Transverse colon (tissue), 4 donors: ENCODE measurements at regions of chr11 and their contacts with region 1.

Region 1: DNA sequence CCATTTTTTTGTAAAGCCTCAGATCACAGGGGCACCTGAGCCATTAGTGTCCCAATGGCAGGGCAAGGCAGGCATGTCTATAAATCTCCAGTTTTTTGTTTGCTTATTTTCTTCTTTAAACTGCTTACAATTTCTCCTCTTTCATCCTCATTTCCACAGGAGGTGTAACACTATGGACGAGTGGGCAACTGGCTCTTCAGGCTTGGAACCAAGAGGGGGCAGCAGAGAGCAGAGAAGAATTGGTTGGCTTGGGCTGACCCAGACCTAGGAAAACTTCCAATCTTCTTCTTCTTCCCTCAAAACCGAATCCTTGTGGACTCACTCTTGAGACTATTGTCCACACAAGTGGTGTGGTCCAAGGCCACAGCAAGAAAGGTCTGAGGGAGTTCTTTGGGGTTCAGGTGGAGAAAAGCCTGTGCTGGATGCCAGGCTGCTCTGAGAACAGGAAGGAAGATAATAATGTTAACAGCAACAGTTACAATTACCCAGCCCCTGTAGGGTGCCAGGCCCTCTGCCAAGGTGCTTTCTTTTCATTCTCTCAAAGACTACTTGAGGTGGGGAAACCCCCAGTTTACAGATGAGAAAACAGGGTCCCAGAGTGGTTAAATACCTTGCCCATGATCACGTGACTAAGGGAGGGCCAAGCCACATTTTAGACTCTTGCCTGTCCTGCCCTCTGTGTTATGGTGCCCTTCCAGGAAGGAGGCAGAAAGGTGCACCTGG is 70.7 kb upstream of the E2F8 start:
- DNase-seq: peak; percentile 74
- H3K4me3 ChIP-seq: no peak overlapping the region
- H3K27ac ChIP-seq: no peak overlapping the region
- H3K4me1 ChIP-seq: peaks cover under 1 to 12% (median under 1%) of the 10 kb centered on the region in 4 donors
- H3K27me3 ChIP-seq: no peaks in the 10 kb centered on the region
- CTCF ChIP-seq: peak; percentile 65 to 80 (median 75)
- EP300 ChIP-seq: no peak
- POLR2A ChIP-seq: no peak

Region 2: GRCh38 chr11:19525276-19526113 is 214.0 kb after region 1 on chr11:
- in situ Hi-C with region 1: loop called in 1 of 4 experiments (anchors 25 kb)
- intact Hi-C with region 1: no loop called
- DNase-seq: no peak
- H3K4me3 ChIP-seq: no peak overlapping the region
- H3K27ac ChIP-seq: no peak overlapping the region
- H3K4me1 ChIP-seq: peaks cover 0 to 4% (median 0%) of the 10 kb centered on the region in 4 donors
- H3K27me3 ChIP-seq: no peaks in the 10 kb centered on the region
- CTCF ChIP-seq: no peak
- EP300 ChIP-seq: no peak
- POLR2A ChIP-seq: no peak